A673 (cell line): ENCODE measurements at regions of chr9 and their contacts with region 1.

Region 1: DNA sequence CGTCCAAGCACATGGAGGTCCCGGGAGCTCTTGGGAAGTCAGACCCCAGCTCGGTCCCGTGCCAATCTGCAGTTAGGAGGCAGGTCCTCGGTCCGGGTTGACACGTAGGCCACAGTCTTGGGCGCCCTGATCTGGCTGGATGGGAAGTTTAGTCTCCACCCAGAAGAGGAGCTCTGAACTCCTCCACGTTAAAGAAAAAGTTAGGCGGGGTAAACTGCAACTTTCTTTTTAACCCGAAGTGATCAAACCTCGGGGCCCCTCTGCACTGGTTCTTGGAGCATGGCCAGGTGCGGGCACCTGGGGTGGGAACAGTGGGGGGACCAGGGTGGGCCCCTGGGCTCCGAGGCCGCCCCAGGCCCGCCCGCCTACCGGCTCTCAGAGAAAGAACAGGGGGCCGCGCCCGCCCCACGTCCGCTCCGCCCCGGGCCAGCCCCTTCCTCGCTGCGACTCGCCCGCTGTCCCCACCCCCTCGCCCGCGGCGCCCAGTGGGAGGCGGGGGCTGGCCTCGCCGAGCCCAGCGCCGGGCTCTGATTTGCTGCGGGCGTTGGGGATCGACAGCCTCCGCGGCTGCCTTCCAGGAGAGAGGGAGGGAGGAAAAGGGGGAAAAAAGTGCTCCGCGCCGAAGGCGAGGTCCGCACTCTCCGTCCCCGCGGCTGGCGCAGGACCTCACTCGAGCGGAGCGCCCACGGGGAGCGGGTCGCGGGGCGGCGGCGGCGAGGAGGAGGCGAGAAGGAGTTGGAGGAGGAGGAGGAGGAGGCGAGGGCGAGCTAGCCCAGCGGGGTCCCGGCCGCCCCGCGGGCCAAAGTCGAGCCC is at the start of gene COL5A1:
- DNase-seq: peak; percentile 96
- H3K4me3 ChIP-seq: peak within 1 kb of the TSS; percentile 81
- H3K27ac ChIP-seq: peak within 1 kb of the TSS; percentile 68
- H3K4me1 ChIP-seq: peaks cover 31% of the 10 kb centered on the region
- H3K27me3 ChIP-seq: no peaks in the 10 kb centered on the region
- CTCF ChIP-seq: no peak
- total RNA-seq, gene COL5A1: 33.6 and 37.6 TPM in 2 replicates

Region 2: DNA sequence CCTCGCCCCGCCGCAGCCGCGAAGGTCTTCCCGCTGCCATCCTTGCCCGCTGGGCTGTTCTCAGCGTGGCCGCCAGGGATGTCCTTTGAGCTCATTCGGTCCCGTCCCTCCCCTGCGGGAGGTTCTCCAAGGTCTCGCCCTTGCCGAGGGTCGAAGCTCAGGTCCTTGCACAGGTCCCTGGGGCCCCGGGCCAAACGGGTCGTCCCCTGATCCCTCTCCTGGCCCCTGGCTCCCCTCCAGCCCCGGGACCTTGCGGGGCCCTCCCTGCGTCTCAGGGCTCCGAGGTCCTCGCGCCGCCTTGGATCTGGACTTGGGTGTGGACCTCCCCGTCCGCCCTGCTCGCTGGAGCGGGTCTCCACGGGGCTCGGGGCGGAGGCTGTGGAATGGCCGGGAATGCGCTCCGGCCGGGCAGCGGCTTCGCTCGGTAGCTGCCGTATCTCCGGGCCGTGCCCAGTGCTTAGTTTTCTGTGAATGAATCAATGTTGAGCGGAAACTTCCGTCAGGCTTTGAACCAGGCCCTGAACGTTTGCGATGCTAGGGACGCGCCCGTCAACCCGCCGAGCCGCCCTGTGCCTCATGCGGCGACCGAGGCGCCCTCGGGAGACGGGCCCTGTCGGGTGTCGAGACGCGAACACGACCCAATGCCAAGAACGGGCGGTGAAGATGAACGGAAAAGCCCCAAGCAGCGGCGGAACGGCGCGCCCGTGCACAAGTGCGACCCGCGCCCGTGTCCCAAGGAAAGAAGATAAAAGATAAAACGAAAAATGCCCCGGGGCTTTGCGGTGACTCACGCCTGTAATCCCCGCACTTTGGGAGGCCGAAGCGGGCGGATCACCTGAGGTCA is 477.8 kb before region 1 on chr9:
- CTCF ChIA-PET with region 1: no interaction called
- POLR2A ChIA-PET with region 1: no interaction called
- intact Hi-C with region 1: loop called (anchors 10 kb)
- DNase-seq: peak; percentile 66
- H3K4me3 ChIP-seq: no peak overlapping the region
- H3K27ac ChIP-seq: no peak overlapping the region
- H3K4me1 ChIP-seq: no peaks in the 10 kb centered on the region
- H3K27me3 ChIP-seq: no peaks in the 10 kb centered on the region
- CTCF ChIP-seq: no peak

Region 3: DNA sequence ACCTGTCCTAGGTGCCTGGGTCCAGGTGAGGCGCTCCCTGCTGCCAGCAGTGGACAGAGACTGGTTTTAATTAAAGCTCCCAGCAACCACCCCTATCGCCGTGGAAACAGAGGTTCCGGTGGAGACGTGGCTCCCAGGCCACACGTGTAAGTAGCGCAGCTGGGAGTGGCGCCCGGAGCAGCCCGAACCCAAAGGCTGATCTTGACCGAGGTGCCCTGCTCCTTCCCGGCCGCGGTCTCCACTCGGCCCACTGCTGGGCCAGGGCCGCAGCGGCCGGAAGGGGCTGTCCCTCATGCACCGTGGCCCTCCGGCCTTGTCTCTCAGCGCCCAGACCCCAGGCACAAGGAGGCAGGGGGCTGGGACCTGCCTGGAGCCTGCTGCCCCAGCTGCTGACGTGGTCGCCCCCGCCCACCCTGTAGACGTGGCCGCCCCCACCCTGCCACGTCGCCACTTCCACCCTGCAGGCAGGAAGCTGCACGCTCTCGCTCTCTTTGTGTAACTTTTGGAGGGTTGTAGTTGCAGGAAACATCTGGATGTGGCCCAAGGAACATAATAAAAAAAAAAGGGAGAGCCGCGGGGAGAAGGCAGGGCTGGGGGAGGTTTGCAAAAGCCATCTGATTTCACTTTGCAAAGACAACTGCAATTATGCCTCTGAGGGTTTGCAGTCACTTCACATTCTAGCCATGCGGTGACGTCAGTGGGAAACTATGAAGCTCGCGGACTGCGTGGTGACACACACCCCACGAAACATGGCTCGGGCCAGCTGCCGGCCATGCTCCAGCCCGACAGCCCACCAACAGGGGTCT is 185.2 kb before region 1 on chr9:
- CTCF ChIA-PET with region 1: no interaction called
- POLR2A ChIA-PET with region 1: no interaction called
- intact Hi-C with region 1: loop called (anchors 5 kb)
- DNase-seq: peak; percentile 94
- H3K4me3 ChIP-seq: no peak overlapping the region
- H3K27ac ChIP-seq: peak overlapping the region; percentile 96
- H3K4me1 ChIP-seq: peaks cover 21% of the 10 kb centered on the region
- H3K27me3 ChIP-seq: no peaks in the 10 kb centered on the region
- CTCF ChIP-seq: no peak

Region 4: DNA sequence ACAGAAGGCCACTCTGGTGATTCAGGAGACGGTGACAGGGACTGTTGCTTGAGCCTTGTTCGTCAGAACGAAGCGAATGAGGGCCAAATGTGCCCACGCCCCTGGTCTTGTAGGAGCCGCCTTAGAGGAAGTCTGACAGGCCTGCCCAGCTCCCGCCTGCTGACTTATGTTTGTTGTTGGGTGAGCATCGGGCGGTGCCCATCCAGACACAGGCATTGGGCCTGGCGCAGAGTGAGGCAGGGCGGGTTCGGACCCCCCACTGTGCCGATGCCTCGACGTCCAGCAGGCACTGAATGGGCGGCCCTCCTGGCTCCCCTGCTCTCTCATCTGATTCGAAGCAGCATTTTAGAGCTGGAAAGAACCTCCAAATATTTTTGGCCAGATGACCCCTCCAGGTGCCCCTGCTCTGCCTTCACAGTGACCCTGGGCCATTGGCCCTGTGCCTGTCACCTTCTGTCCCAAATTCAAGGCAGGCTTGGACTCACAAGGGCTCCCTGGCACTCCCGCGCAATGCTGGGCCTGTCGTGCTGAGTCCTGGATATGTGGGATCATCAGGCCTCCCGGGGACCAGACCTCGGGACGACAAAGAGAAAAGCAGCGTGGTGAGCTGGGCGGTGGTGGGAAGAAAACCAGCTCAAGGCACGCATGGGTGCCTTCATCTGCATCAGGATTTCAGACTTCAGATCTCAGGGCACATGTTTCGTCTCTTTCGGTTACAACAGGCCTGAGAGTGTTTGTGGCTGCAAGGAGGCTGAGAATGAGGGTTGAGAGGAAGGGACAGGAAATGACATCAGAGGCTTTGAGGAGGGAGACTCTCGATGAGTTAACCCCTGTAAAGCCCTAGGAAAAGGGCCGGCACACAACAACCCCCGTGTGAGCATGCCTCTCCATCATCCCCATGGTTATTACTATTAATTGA is 409.0 kb after region 1 on chr9:
- CTCF ChIA-PET with region 1: no interaction called
- POLR2A ChIA-PET with region 1: no interaction called
- intact Hi-C with region 1: no loop called
- DNase-seq: peak; percentile 29
- H3K4me3 ChIP-seq: no peak overlapping the region
- H3K27ac ChIP-seq: no peak overlapping the region
- H3K4me1 ChIP-seq: no peaks in the 10 kb centered on the region
- H3K27me3 ChIP-seq: no peaks in the 10 kb centered on the region
- CTCF ChIP-seq: no peak